CD8-positive, alpha-beta T cell (primary cell): ENCODE measurements at regions of chr3 and their contacts with region 1.

Region 1: GRCh38 chr3:133644768-133645167 is 17.0 kb downstream of the TOPBP1 start:
- DNase-seq: no peak
- ATAC-seq: no peak
- H3K4me3 ChIP-seq: no peak overlapping the region
- H3K4me3 Mint-ChIP-seq: no peak overlapping the region
- H3K27ac ChIP-seq: no peak overlapping the region
- H3K27ac Mint-ChIP-seq: no peak overlapping the region
- H3K4me1 ChIP-seq: no peaks in the 10 kb centered on the region
- H3K4me1 Mint-ChIP-seq: peaks cover 3% of the 10 kb centered on the region
- H3K27me3 ChIP-seq: no peaks in the 10 kb centered on the region
- H3K27me3 Mint-ChIP-seq: no peaks in the 10 kb centered on the region
- CTCF ChIP-seq: no peak

Region 2: GRCh38 chr3:133354721-133355120 is 290.0 kb before region 1 on chr3:
- CTCF ChIA-PET with region 1: no interaction called
- POLR2A ChIA-PET with region 1: no interaction called
- intact Hi-C with region 1: no loop called
- DNase-seq: no peak
- ATAC-seq: no peak
- H3K4me3 ChIP-seq: no peak overlapping the region
- H3K4me3 Mint-ChIP-seq: no peak overlapping the region
- H3K27ac ChIP-seq: no peak overlapping the region
- H3K27ac Mint-ChIP-seq: no peak overlapping the region
- H3K4me1 ChIP-seq: no peaks in the 10 kb centered on the region
- H3K4me1 Mint-ChIP-seq: no peaks in the 10 kb centered on the region
- H3K27me3 ChIP-seq: peaks cover 0 to 2% of the 10 kb centered on the region in 2 experiments
- H3K27me3 Mint-ChIP-seq: no peaks in the 10 kb centered on the region
- CTCF ChIP-seq: no peak

Region 3: DNA sequence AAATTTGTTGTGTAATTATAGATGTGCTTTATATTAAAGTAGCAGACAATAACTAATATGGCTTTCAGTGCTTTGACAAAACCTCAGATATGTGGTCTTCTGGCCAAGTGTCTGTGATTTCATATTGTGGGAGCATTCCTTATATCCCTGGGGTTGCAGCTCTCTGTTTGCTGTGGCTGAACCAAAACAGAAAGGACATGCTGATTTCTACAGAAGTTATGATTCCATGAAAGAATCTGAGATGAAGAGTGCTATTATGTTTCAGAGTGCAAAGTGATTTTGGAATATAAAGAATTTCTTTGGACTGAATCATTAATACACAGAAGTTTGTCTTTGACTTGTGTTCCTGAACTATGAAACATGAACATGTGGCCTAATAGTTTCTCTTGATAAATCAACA is 34.7 kb before region 1 on chr3:
- CTCF ChIA-PET with region 1: no interaction called
- POLR2A ChIA-PET with region 1: no interaction called
- intact Hi-C with region 1: loop called in 1 of 2 experiments (anchors 5 kb)
- DNase-seq: no peak
- ATAC-seq: no peak
- H3K4me3 ChIP-seq: no peak overlapping the region
- H3K4me3 Mint-ChIP-seq: no peak overlapping the region
- H3K27ac ChIP-seq: no peak overlapping the region
- H3K27ac Mint-ChIP-seq: no peak overlapping the region
- H3K4me1 ChIP-seq: no peaks in the 10 kb centered on the region
- H3K4me1 Mint-ChIP-seq: no peaks in the 10 kb centered on the region
- H3K27me3 ChIP-seq: no peaks in the 10 kb centered on the region
- H3K27me3 Mint-ChIP-seq: no peaks in the 10 kb centered on the region
- CTCF ChIP-seq: no peak